Calu3 (cell line): ENCODE measurements at regions of chr18 and their contacts with region 1.

Region 1: DNA sequence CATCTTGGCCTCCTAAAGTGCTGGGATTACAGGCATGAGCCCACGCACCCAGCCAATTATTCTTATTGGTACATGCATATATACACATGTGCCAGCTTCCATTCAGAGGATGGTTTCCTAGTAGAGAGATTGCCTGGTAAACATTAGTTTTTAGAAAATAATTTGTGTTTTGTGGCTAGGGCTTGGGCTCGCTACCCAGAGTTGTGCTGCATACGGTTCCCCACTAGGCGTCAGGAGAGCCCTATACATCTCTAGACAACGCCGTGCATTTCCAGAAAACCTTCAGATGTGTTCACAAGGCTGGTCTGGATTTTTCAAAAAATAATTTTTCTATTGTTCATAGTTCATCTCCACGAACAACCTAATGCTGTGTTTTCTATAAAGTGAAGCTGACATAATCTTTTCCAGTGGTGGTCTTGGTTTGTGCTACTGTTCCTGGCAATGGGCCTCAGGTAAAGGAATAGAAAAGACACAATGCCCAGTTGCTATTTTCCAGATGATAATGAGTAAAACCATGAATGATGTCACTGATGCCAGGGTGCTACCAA is 14.7 kb upstream of the AFG3L2 start:
- DNase-seq: peak; percentile 71
- H3K4me3 Mint-ChIP-seq: no peak overlapping the region
- H3K27ac Mint-ChIP-seq: no peak overlapping the region
- H3K4me1 Mint-ChIP-seq: peaks cover 23% of the 10 kb centered on the region
- H3K27me3 Mint-ChIP-seq: no peaks in the 10 kb centered on the region
- CTCF ChIP-seq: peak; percentile 83

Region 2: GRCh38 chr18:12376718-12377555 is 14.8 kb before region 1 on chr18 and contains the start of gene AFG3L2:
- CTCF ChIA-PET with region 1: interaction called, 10 read pairs
- intact Hi-C with region 1: no loop called
- DNase-seq: peak; percentile 100
- H3K4me3 Mint-ChIP-seq: peak within 1 kb of the TSS; percentile 89
- H3K27ac Mint-ChIP-seq: peak within 1 kb of the TSS; percentile 92
- H3K4me1 Mint-ChIP-seq: peaks cover 38% of the 10 kb centered on the region
- H3K27me3 Mint-ChIP-seq: no peaks in the 10 kb centered on the region
- CTCF ChIP-seq: no peak
- total RNA-seq, gene AFG3L2: 55.1 and 59.2 TPM in 2 replicates

Region 3: DNA sequence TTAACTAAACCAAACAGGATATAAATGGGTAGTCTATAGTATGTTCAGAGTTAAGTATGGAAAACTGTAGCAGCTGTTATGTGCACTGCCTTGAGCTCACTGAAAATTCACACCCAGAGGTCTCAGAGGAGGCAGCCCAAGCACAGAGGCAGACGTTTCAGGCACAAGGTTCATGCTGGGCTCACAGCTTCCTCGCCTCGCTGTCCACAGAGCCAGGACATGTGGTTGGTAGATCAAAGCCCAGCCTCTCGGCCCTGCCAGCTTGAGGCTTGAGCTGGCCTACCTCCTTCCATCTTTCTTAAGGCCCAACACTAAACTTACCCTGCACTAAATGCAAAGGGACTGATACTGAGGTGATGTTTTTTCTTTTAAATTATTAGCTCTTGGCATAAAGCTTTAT is 59.7 kb after region 1 on chr18:
- CTCF ChIA-PET with region 1: no interaction called
- intact Hi-C with region 1: loop called (anchors 5 kb)
- DNase-seq: no peak
- H3K4me3 Mint-ChIP-seq: no peak overlapping the region
- H3K27ac Mint-ChIP-seq: no peak overlapping the region
- H3K4me1 Mint-ChIP-seq: no peaks in the 10 kb centered on the region
- H3K27me3 Mint-ChIP-seq: no peaks in the 10 kb centered on the region
- CTCF ChIP-seq: no peak

Region 4: GRCh38 chr18:12657684-12658425 is 266.2 kb after region 1 on chr18 and contains the start of gene SPIRE1:
- CTCF ChIA-PET with region 1: no interaction called
- intact Hi-C with region 1: loop called (anchors 1 kb)
- DNase-seq: peak; percentile 81
- H3K4me3 Mint-ChIP-seq: peak within 1 kb of the TSS; percentile 54
- H3K27ac Mint-ChIP-seq: peak within 1 kb of the TSS; percentile 93
- H3K4me1 Mint-ChIP-seq: peaks cover 38% of the 10 kb centered on the region
- H3K27me3 Mint-ChIP-seq: no peaks in the 10 kb centered on the region
- CTCF ChIP-seq: no peak
- total RNA-seq, gene SPIRE1: 91.7 and 98.6 TPM in 2 replicates

Region 5: DNA sequence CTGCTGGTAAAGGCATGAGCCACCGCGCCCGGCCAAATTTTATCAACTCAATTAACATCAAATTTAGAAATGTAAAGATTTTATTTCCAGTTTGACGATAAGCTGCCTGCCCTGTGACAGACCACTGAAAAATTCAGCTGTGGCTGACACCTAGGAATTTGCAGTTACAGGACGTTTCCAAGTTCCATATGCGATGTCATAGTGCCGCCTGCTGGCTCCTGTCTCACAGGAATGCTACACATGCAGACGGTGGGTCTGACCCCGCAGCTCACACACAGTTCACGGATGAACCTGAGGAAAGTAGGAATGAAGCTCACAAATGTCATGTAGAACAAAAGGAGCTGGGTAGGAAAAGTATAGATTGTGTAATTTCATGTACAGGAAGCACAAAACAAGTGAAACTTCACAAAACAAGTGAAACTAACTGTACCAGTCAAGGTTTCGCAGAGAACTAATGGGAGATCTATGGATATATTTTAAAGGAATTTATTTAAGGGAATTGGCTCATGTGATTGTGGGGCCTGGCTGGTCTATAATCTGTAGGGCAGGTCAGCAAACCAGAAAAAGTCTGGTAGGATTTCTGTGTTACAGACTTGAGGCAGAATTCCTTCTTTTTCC is 542.9 kb after region 1 on chr18:
- CTCF ChIA-PET with region 1: no interaction called
- intact Hi-C with region 1: loop called (anchors 2 kb)
- DNase-seq: peak; percentile 79
- H3K4me3 Mint-ChIP-seq: no peak overlapping the region
- H3K27ac Mint-ChIP-seq: no peak overlapping the region
- H3K4me1 Mint-ChIP-seq: peaks cover 9% of the 10 kb centered on the region
- H3K27me3 Mint-ChIP-seq: peaks cover 16% of the 10 kb centered on the region
- CTCF ChIP-seq: peak; percentile 92